Heart left ventricle (tissue), 16 donors: ENCODE measurements at regions of chr10 and their contacts with region 1.

Region 1: DNA sequence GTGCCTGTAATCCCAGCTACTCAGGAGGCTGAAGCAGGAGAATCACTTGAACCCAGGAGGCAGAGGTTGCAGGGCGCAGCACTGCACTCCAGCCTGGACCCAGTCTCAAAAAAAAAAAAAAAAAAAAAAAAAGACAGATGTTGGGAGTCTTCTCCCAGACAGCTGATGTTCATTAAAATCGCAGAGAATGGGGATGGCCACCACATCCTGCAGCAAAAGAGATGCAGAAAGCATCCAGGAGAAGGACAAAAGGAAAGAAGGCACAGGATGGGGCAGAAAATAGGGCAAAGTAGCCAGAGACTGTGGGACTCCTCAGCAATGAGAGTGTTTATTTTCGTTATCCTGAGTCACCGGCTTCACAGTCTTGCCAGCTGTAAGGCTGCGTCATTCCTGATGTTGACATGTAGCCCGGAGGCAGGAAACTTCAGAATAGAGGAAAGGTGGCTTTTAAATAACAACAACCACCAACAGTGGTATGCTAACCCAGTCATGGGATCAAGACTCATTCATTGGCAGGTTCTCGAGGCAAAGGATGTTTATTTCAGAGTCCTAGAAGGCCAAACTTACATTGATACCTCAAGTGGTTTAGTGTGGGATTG is 149.5 kb upstream of the SVIL start:
- DNase-seq: peak in 3 of 5 donors; percentile 58 to 75 (median 61)
- ATAC-seq: peak; percentile 95 to 99 (median 98)
- H3K4me3 ChIP-seq: no peak overlapping the region
- H3K27ac ChIP-seq: peak overlapping the region in 11 of 12 donors; percentile 2 to 75 (median 64)
- H3K4me1 ChIP-seq: peaks cover 0 to 19% (median 10%) of the 10 kb centered on the region in 12 donors
- H3K27me3 ChIP-seq: no peaks in the 10 kb centered on the region
- CTCF ChIP-seq: no peak
- POLR2A ChIP-seq: no peak

Region 2: GRCh38 chr10:29740981-29741545 is 43.2 kb before region 1 on chr10:
- intact Hi-C with region 1: loop called in 2 of 10 experiments (anchors 2 to 5 kb)
- DNase-seq: no peak
- ATAC-seq: peak in 2 of 4 donors; percentile 25 to 39
- H3K4me3 ChIP-seq: no peak overlapping the region
- H3K27ac ChIP-seq: peak overlapping the region in 7 of 12 donors; percentile 26 to 81 (median 66)
- H3K4me1 ChIP-seq: peaks cover 0 to 26% (median 8%) of the 10 kb centered on the region in 12 donors
- H3K27me3 ChIP-seq: no peaks in the 10 kb centered on the region
- CTCF ChIP-seq: no peak
- POLR2A ChIP-seq: no peak